HepG2 (cell line): ENCODE measurements at regions of chr17 and their contacts with region 1.

Region 1: DNA sequence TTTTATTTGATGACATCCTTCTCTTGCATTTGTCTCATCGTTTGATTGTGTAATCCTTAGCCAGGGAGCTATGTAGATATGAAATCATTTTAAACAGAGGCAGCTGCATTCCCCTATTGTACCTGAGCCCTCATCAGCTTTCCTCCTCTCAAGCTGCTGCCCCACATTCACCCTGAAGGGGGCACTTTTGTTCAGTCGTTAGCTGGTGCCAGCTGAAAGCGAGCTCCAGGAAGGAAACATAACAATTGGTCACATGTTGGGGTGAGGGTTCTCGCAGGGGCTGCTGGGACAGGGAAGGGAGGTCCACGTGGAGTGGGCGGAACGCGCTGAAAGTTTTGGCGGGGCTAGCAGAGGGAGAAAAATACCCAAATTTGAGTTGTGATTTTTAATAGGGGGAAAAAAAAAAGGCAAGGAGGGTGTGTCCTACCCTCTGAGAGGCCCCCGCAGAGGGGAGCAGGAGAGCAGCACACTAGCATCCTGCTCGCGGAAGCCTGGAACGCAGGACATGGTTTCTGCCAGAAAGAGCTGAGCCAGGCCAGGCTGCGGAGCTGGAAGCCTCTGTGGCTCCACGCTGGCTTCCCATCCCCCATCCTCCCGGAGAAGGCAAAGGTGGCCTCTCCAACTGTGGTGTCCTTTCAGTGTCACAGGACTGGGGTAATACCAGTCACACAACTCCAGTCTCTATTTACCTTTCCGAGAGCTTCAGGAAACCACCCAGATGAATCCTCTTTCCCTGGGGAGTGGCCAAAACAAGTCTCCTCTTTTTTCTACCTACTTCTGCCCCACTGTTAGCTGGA is 8.5 kb upstream of the MSL1 start:
- DNase-seq: peak; percentile 98
- ATAC-seq: peak; percentile 67
- H3K4me3 ChIP-seq: peak overlapping the region; percentile 25 to 67 (median 39)
- H3K27ac ChIP-seq: peak overlapping the region; percentile 95
- H3K4me1 ChIP-seq: peaks cover 89% of the 10 kb centered on the region
- H3K27me3 ChIP-seq: no peaks in the 10 kb centered on the region
- CTCF ChIP-seq: peak; percentile 98
- EP300 ChIP-seq: peak; percentile 54 to 76; a peak in 3 of 4 replicates
- POLR2A ChIP-seq: peak; percentile 74 to 93; a peak in 3 of 4 replicates
- RAD21 ChIP-seq: peak; percentile 90

Region 2: GRCh38 chr17:40019140-40019991 is 93.9 kb before region 1 on chr17:
- CTCF ChIA-PET with region 1: interaction called, 3 read pairs
- POLR2A ChIA-PET with region 1: interaction called, 13 read pairs
- in situ Hi-C with region 1: no loop called
- intact Hi-C with region 1: no loop called
- DNase-seq: no peak
- ATAC-seq: peak; percentile 21; the same call in 2 of the 3 replicates
- H3K4me3 ChIP-seq: no peak overlapping the region
- H3K27ac ChIP-seq: no peak overlapping the region
- H3K4me1 ChIP-seq: peaks cover 22% of the 10 kb centered on the region
- H3K27me3 ChIP-seq: no peaks in the 10 kb centered on the region
- CTCF ChIP-seq: no peak
- EP300 ChIP-seq: no peak
- POLR2A ChIP-seq: no peak
- RAD21 ChIP-seq: no peak

Region 3: GRCh38 chr17:40069751-40070708 is 43.3 kb before region 1 on chr17:
- CTCF ChIA-PET with region 1: interaction called, 4 read pairs
- POLR2A ChIA-PET with region 1: interaction called, 33 read pairs
- in situ Hi-C with region 1: no loop called
- intact Hi-C with region 1: no loop called
- DNase-seq: no peak
- ATAC-seq: no peak
- H3K4me3 ChIP-seq: peak overlapping the region in 1 of 3 experiments; percentile 56; a peak in 1 of 6 replicates
- H3K27ac ChIP-seq: no peak overlapping the region
- H3K4me1 ChIP-seq: peaks cover 90% of the 10 kb centered on the region
- H3K27me3 ChIP-seq: no peaks in the 10 kb centered on the region
- CTCF ChIP-seq: peak; percentile 21; the same call in 1 of the 2 replicates
- EP300 ChIP-seq: no peak
- POLR2A ChIP-seq: no peak
- RAD21 ChIP-seq: no peak

Region 4: DNA sequence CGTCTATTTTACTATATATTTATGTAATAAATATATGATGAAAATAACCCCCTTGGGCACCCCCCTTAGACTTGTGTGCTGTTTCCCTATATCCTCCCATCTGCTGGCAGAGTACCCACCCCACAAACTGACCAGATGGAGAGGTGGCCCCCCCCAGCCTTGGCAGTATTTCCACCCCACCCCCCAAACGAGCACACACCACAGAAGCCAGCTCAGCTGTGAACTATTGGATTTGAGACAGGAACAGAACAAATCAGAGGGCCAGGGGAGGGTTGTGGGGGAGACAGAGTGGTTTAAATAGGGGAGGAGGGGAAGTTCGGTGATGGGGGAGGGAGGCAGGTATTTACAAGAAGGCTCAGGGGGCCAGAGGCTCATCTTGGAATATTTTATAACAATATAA is 20.7 kb before region 1 on chr17:
- CTCF ChIA-PET with region 1: no interaction called
- POLR2A ChIA-PET with region 1: interaction called, 568 read pairs
- in situ Hi-C with region 1: no loop called
- intact Hi-C with region 1: no loop called
- DNase-seq: no peak
- ATAC-seq: no peak
- H3K4me3 ChIP-seq: no peak overlapping the region
- H3K27ac ChIP-seq: no peak overlapping the region
- H3K4me1 ChIP-seq: peaks cover 11% of the 10 kb centered on the region
- H3K27me3 ChIP-seq: no peaks in the 10 kb centered on the region
- CTCF ChIP-seq: no peak
- EP300 ChIP-seq: no peak
- POLR2A ChIP-seq: no peak
- RAD21 ChIP-seq: no peak

Region 5: GRCh38 chr17:40139566-40140058 is 26.3 kb after region 1 on chr17:
- CTCF ChIA-PET with region 1: no interaction called
- POLR2A ChIA-PET with region 1: interaction called, 142 read pairs
- in situ Hi-C with region 1: no loop called
- intact Hi-C with region 1: loop called (anchors 1 kb)
- DNase-seq: no peak
- ATAC-seq: peak; percentile 25
- H3K4me3 ChIP-seq: peak overlapping the region; percentile 61 to 93 (median 75)
- H3K27ac ChIP-seq: peak overlapping the region; percentile 93
- H3K4me1 ChIP-seq: peaks cover 37% of the 10 kb centered on the region
- H3K27me3 ChIP-seq: no peaks in the 10 kb centered on the region
- CTCF ChIP-seq: no peak
- EP300 ChIP-seq: no peak
- POLR2A ChIP-seq: no peak
- RAD21 ChIP-seq: no peak

Region 6: GRCh38 chr17:40203131-40203530 is 89.8 kb after region 1 on chr17:
- CTCF ChIA-PET with region 1: no interaction called
- POLR2A ChIA-PET with region 1: interaction called, 20 read pairs
- in situ Hi-C with region 1: no loop called
- intact Hi-C with region 1: no loop called
- DNase-seq: no peak
- ATAC-seq: no peak
- H3K4me3 ChIP-seq: no peak overlapping the region
- H3K27ac ChIP-seq: peak overlapping the region; percentile 0
- H3K4me1 ChIP-seq: peaks cover 78% of the 10 kb centered on the region
- H3K27me3 ChIP-seq: no peaks in the 10 kb centered on the region
- CTCF ChIP-seq: no peak
- EP300 ChIP-seq: no peak
- POLR2A ChIP-seq: no peak
- RAD21 ChIP-seq: no peak

Region 7: DNA sequence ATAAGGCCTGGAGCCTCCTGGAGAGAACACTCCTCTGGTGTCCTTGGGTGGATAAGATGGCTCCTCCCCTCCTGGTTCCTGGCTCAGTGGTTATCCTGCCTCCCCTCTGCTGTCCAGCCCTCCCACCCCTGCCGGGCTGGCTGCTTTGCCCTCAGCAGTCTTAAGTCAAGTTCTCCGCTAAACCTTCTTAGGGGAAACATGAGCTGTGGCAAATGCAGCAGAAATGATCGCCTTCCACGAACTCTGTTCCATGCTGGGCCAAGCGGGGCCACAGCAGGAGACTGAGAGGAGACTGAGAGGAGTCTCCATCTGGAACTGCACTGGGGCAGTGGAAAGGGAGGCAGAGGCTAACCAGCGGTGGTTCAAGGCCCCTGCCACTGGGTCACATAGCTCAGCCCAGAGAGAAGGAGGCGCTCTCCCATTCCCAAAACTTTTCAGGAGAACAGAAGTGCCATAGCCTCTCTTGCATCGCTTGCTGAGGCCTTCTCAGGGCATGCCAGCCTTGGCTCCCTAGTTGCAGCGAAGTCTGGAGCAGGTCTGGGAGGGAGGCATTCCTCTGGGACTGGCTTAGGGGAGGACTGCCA is 361.2 kb after region 1 on chr17:
- CTCF ChIA-PET with region 1: no interaction called
- POLR2A ChIA-PET with region 1: no interaction called
- in situ Hi-C with region 1: no loop called
- intact Hi-C with region 1: no loop called
- DNase-seq: no peak
- ATAC-seq: no peak; the same call in 2 of the 3 replicates
- H3K4me3 ChIP-seq: no peak overlapping the region
- H3K27ac ChIP-seq: no peak overlapping the region
- H3K4me1 ChIP-seq: peaks cover 51% of the 10 kb centered on the region
- H3K27me3 ChIP-seq: no peaks in the 10 kb centered on the region
- CTCF ChIP-seq: no peak
- EP300 ChIP-seq: no peak
- POLR2A ChIP-seq: no peak
- RAD21 ChIP-seq: no peak